Activated CD4-positive, alpha-beta T cell treated with anti-CD3 and anti-CD28 coated beads, Interleukin-2, amount 10 ng/mL, durations not matched to agents 24 days and 14 days (primary cell): ENCODE measurements at regions of chr17 and their contacts with region 1.

Region 1: GRCh38 chr17:49496183-49496866 is 1.2 kb downstream of the NGFR start:
- DNase-seq: peak; percentile 96
- H3K4me3 Mint-ChIP-seq: peak overlapping the region; percentile 81
- H3K27ac Mint-ChIP-seq: no peak overlapping the region
- H3K4me1 Mint-ChIP-seq: peaks cover 20% of the 10 kb centered on the region
- H3K27me3 Mint-ChIP-seq: peaks cover 77% of the 10 kb centered on the region

Region 2: GRCh38 chr17:49414622-49415350 is 81.5 kb before region 1 on chr17 and contains the start of gene PHB1:
- intact Hi-C with region 1: loop called (anchors 2 kb)
- DNase-seq: peak; percentile 98
- H3K4me3 Mint-ChIP-seq: peak within 1 kb of the TSS; percentile 91
- H3K27ac Mint-ChIP-seq: peak within 1 kb of the TSS; percentile 83
- H3K4me1 Mint-ChIP-seq: peaks cover 5% of the 10 kb centered on the region
- H3K27me3 Mint-ChIP-seq: peaks cover 4% of the 10 kb centered on the region
- total RNA-seq, gene PHB1: 440 and 448 TPM in 2 replicates

Region 3: DNA sequence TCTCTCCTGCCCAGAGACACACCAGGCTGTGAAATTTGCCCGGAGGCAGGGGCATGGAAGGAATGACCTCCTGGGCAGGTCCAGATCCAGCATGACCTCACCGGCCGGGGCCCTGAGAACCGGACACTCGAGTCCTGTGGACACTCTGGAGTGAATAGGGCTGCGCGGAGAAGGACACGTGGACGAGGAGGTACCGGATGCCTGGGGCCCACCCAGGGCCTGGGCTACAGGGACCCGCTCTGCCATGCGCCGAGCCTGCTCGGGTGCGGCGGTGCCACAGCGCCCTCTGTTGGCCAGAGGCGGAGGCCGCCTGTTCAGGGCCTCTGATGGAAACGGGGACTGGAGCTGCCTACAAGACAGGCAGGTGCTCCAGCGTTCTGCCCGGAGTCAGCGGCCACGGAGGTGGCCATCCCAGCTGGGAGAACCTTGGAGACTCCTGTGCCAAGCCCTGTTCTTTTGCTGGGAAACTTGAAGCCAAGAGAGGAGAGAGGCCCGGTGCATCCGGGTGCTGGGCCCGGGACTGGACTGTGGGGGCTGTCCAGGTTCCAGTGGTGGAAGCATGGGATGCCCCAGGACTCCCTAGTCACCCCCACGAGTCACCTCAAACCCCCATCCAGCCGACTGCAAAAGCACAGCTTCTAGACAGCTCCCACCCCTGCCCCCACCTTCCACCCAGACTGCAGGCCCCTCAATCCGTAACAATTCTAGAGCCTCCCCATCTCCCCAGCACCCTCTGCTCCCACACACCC is 60.1 kb after region 1 on chr17:
- intact Hi-C with region 1: loop called (anchors 2 kb)
- DNase-seq: peak; percentile 96
- H3K4me3 Mint-ChIP-seq: no peak overlapping the region
- H3K27ac Mint-ChIP-seq: no peak overlapping the region
- H3K4me1 Mint-ChIP-seq: peaks cover 7% of the 10 kb centered on the region
- H3K27me3 Mint-ChIP-seq: peaks cover 15% of the 10 kb centered on the region

Region 4: GRCh38 chr17:49968380-49969133 is 472.2 kb after region 1 on chr17:
- intact Hi-C with region 1: loop called (anchors 5 kb)
- DNase-seq: peak; percentile 89
- H3K4me3 Mint-ChIP-seq: peak overlapping the region; percentile 87
- H3K27ac Mint-ChIP-seq: peak overlapping the region; percentile 56
- H3K4me1 Mint-ChIP-seq: peaks cover 30% of the 10 kb centered on the region
- H3K27me3 Mint-ChIP-seq: peaks cover 90% of the 10 kb centered on the region